Activated CD8-positive, alpha-beta T cell treated with anti-CD3 and anti-CD28 coated beads for 36 hours (primary cell): ENCODE measurements at regions of chr2 and their contacts with region 1.

Region 1: DNA sequence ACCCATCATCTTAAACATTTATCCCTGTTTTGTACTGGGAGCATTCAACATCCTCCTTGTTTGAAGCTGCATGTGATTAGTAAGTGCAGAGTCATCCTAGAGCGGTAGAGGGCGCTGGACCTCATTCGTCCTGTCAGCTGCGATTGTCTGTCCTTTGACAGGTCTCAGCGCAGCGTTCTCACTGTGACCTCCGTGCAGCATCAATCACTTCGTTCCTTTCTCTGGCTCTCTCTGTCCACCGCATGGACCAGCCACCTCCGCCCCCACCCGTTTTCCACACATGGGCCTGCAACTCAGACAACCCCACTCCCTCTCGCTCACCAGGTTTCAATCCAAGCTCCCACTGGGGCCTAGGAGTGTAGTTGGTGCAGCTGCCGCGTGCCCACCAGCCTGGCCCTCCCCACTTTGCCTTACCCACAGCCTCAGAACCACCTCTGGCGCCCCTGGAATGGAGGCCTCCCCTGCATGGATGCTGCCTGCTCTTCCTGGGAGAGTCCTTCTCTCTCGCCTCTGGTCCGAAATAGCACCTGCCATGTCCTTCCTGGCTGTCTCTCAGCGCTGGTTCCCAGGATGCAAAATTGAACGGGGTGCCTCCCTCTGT is 90.5 kb downstream of the NDUFA10 start:
- DNase-seq: peak; percentile 81
- ATAC-seq: peak; percentile 80
- H3K4me3 Mint-ChIP-seq: no peak overlapping the region
- H3K27ac Mint-ChIP-seq: no peak overlapping the region
- H3K4me1 Mint-ChIP-seq: peaks cover 5% of the 10 kb centered on the region
- H3K27me3 Mint-ChIP-seq: peaks cover 6% of the 10 kb centered on the region
- CTCF ChIP-seq: peak; percentile 86

Region 2: DNA sequence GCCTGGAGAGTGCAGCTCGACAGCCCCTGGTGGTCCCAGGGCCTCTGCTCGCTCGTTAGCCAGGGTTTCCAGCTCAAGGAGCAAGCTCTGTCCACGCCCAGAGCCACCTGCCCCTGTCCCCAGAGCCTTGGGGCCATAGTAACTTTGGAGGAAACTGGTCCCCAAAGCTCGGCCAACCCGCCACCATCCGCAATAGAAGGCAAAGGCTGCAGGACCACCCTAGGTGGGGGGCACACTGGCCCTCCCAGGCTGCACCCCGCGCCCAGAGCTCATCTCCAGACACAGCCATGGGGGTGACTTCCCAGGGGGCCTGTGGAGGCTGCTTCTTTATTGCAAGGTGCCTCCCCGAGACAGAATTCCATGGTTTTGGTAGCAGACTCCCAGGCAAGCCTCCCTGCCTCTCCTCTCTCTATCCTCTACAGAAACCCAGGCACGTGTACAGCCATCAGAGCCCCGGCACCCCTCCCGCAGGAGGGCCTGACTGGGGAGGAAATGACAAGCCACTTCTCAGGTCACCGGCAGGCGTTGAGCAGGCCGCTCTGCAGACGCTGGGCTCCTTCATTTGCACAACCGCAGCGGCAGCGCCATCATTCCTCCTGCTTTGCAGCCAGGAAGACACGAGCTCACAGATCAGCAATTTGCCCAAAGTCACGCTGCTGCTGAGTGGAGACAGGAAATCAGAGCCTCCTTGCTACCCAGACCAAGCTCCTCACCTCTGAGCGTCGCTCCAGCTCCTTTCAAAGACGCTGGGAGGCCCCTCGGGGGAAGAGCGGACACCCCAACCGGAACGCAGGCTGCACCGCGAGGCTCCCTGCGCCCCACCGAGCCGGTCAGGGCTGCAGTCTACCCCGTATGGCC is 10.3 kb after region 1 on chr2:
- CTCF ChIA-PET with region 1: interaction called, 20 read pairs
- POLR2A ChIA-PET with region 1: no interaction called
- intact Hi-C with region 1: no loop called
- DNase-seq: peak; percentile 52
- ATAC-seq: peak; percentile 81
- H3K4me3 Mint-ChIP-seq: no peak overlapping the region
- H3K27ac Mint-ChIP-seq: peak overlapping the region; percentile 70
- H3K4me1 Mint-ChIP-seq: peaks cover 8% of the 10 kb centered on the region
- H3K27me3 Mint-ChIP-seq: no peaks in the 10 kb centered on the region
- CTCF ChIP-seq: no peak

Region 3: GRCh38 chr2:239979243-239980023 is 44.8 kb after region 1 on chr2:
- CTCF ChIA-PET with region 1: interaction called, 10 read pairs
- POLR2A ChIA-PET with region 1: no interaction called
- intact Hi-C with region 1: no loop called
- DNase-seq: no peak
- ATAC-seq: no peak
- H3K4me3 Mint-ChIP-seq: no peak overlapping the region
- H3K27ac Mint-ChIP-seq: no peak overlapping the region
- H3K4me1 Mint-ChIP-seq: peaks cover 3% of the 10 kb centered on the region
- H3K27me3 Mint-ChIP-seq: no peaks in the 10 kb centered on the region
- CTCF ChIP-seq: no peak

Region 4: GRCh38 chr2:240095556-240096523 is 161.2 kb after region 1 on chr2:
- CTCF ChIA-PET with region 1: no interaction called
- POLR2A ChIA-PET with region 1: no interaction called
- intact Hi-C with region 1: no loop called
- DNase-seq: no peak
- ATAC-seq: no peak
- H3K4me3 Mint-ChIP-seq: no peak overlapping the region
- H3K27ac Mint-ChIP-seq: no peak overlapping the region
- H3K4me1 Mint-ChIP-seq: no peaks in the 10 kb centered on the region
- H3K27me3 Mint-ChIP-seq: peaks cover 66% of the 10 kb centered on the region
- CTCF ChIP-seq: no peak